ENCODE measurements at regions of chr10 and their contacts with region 1.

Region 1: GRCh38 chr10:22611425-22612115 is 102.8 kb downstream of the PIP4K2A start:
- DNase-seq: no peak
- H3K27ac ChIP-seq: no peak overlapping the region
- CTCF ChIP-seq: no peak

Region 2: GRCh38 chr10:22325272-22326144 is 286.1 kb before region 1 on chr10:
- CTCF ChIA-PET with region 1: no interaction called
- POLR2A ChIA-PET with region 1: no interaction called
- DNase-seq: peak; percentile 79
- H3K27ac ChIP-seq: peak overlapping the region; percentile 78
- CTCF ChIP-seq: no peak

Region 3: GRCh38 chr10:22649994-22650393 is 38.4 kb after region 1 on chr10:
- CTCF ChIA-PET with region 1: interaction called, 12 read pairs
- POLR2A ChIA-PET with region 1: no interaction called
- DNase-seq: no peak
- H3K27ac ChIP-seq: no peak overlapping the region
- CTCF ChIP-seq: no peak

Region 4: GRCh38 chr10:22737587-22737986 is 126.0 kb after region 1 on chr10:
- CTCF ChIA-PET with region 1: no interaction called
- POLR2A ChIA-PET with region 1: no interaction called
- DNase-seq: peak; percentile 44
- H3K27ac ChIP-seq: no peak overlapping the region
- CTCF ChIP-seq: no peak